ENCODE measurements at regions of chr5 and their contacts with region 1.

Region 1: GRCh38 chr5:6377905-6378765 is at the start of gene MED10:
- DNase-seq: peak; percentile 91
- ATAC-seq: peak; percentile 98
- H3K4me3 ChIP-seq: peak within 1 kb of the TSS; percentile 84
- H3K27ac ChIP-seq: peak within 1 kb of the TSS; percentile 80
- H3K4me1 ChIP-seq: peaks cover 4% of the 10 kb centered on the region
- H3K27me3 ChIP-seq: no peaks in the 10 kb centered on the region
- CTCF ChIP-seq: no peak
- POLR2A ChIP-seq: peak; percentile 85
- RAD21 ChIP-seq: no peak
- total RNA-seq, gene MED10: 9.1 and 15.6 TPM in 2 replicates

Region 2: GRCh38 chr5:6419340-6419852 is 41.3 kb after region 1 on chr5:
- CTCF ChIA-PET with region 1: no interaction called
- POLR2A ChIA-PET with region 1: no interaction called
- dilution Hi-C with region 1: no loop called
- in situ Hi-C with region 1: no loop called
- intact Hi-C with region 1: no loop called
- DNase-seq: no peak
- ATAC-seq: no peak
- H3K4me3 ChIP-seq: no peak overlapping the region
- H3K27ac ChIP-seq: no peak overlapping the region
- H3K4me1 ChIP-seq: no peaks in the 10 kb centered on the region
- H3K27me3 ChIP-seq: no peaks in the 10 kb centered on the region
- CTCF ChIP-seq: no peak
- POLR2A ChIP-seq: no peak
- RAD21 ChIP-seq: no peak

Region 3: GRCh38 chr5:6592601-6593000 is 214.5 kb after region 1 on chr5:
- CTCF ChIA-PET with region 1: no interaction called
- POLR2A ChIA-PET with region 1: no interaction called
- dilution Hi-C with region 1: no loop called
- in situ Hi-C with region 1: loop called (anchors 10 kb)
- intact Hi-C with region 1: no loop called
- DNase-seq: peak; percentile 28
- ATAC-seq: no peak
- H3K4me3 ChIP-seq: no peak overlapping the region
- H3K27ac ChIP-seq: no peak overlapping the region
- H3K4me1 ChIP-seq: no peaks in the 10 kb centered on the region
- H3K27me3 ChIP-seq: no peaks in the 10 kb centered on the region
- CTCF ChIP-seq: no peak
- POLR2A ChIP-seq: no peak
- RAD21 ChIP-seq: no peak

Region 4: GRCh38 chr5:6603643-6604042 is 225.5 kb after region 1 on chr5:
- CTCF ChIA-PET with region 1: no interaction called
- POLR2A ChIA-PET with region 1: no interaction called
- dilution Hi-C with region 1: no loop called
- in situ Hi-C with region 1: loop called (anchors 10 kb)
- intact Hi-C with region 1: loop called (anchors 10 kb)
- DNase-seq: no peak
- ATAC-seq: no peak
- H3K4me3 ChIP-seq: no peak overlapping the region
- H3K27ac ChIP-seq: no peak overlapping the region
- H3K4me1 ChIP-seq: no peaks in the 10 kb centered on the region
- H3K27me3 ChIP-seq: no peaks in the 10 kb centered on the region
- CTCF ChIP-seq: no peak
- POLR2A ChIP-seq: no peak
- RAD21 ChIP-seq: no peak

Region 5: GRCh38 chr5:6686915-6687409 is 308.8 kb after region 1 on chr5:
- CTCF ChIA-PET with region 1: no interaction called
- POLR2A ChIA-PET with region 1: no interaction called
- dilution Hi-C with region 1: no loop called
- in situ Hi-C with region 1: no loop called
- intact Hi-C with region 1: no loop called
- DNase-seq: peak; percentile 60
- ATAC-seq: peak; percentile 98
- H3K4me3 ChIP-seq: peak overlapping the region; percentile 35
- H3K27ac ChIP-seq: no peak overlapping the region
- H3K4me1 ChIP-seq: no peaks in the 10 kb centered on the region
- H3K27me3 ChIP-seq: peaks cover 3% of the 10 kb centered on the region; the same call in 1 of the 2 replicates
- CTCF ChIP-seq: no peak
- POLR2A ChIP-seq: no peak
- RAD21 ChIP-seq: no peak